Dorsolateral prefrontal cortex (tissue), 120 donors: ENCODE measurements at regions of chr5 and their contacts with region 1.

Region 1: DNA sequence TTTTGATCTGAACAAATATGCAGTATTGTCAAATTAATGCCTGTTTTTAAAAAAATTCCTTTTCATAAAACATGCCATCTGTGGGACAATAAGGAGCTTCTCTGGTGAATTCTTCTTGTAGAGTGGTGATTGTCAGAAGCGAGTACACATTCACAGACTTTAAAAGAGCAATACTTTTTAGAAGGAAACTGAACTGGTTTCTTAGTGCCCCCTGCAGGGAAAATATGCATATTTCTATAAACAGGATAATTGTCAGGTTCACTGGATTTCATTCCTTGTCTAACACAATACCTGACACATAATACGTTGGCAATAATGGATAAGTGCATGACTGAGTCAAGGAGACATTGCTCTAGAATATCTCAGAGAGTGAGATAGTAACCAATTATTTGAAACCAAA is 133.7 kb downstream of the KIF4B start:
- DNase-seq: no peak
- H3K4me3 ChIP-seq: no peak overlapping the region
- H3K27ac ChIP-seq: no peak overlapping the region
- H3K27me3 ChIP-seq: no peaks in the 10 kb centered on the region
- CTCF ChIP-seq: peak in 49 of 56 donors; percentile 18 to 64 (median 45)

Region 2: GRCh38 chr5:154967421-154968024 is 179.7 kb before region 1 on chr5:
- intact Hi-C with region 1: loop called in 1 of 2 experiments (anchors 10 kb)
- DNase-seq: no peak
- H3K4me3 ChIP-seq: no peak overlapping the region
- H3K27ac ChIP-seq: peak overlapping the region in 23 of 59 donors; percentile 1 to 51 (median 25)
- H3K27me3 ChIP-seq: no peaks in the 10 kb centered on the region
- CTCF ChIP-seq: peak; percentile 19 to 74 (median 62)

Region 3: DNA sequence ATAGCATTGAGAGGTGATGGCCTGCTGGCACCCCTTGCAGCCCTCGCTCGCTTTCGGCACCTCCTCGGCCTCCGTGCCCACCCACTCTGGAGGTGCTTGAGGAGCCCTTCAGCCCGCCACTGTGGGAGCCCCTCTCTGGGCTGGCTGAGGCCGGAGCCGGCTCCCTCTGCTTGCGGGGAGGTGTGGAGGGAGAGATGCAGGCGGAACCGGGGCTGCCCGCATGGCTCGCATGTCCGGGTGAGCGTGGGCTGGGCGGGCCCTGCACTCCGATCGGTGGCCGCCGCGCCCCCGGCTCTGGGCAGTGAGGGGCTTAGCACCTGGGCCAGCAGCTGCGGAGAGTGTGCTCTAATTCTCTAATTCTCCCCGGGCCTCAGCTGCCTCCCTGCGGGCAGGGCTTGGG is 32.6 kb before region 1 on chr5:
- intact Hi-C with region 1: no loop called
- DNase-seq: no peak
- H3K4me3 ChIP-seq: no peak overlapping the region
- H3K27ac ChIP-seq: no peak overlapping the region
- H3K27me3 ChIP-seq: no peaks in the 10 kb centered on the region
- CTCF ChIP-seq: no peak